ENCODE measurements at regions of chr7 and their contacts with region 1.

Region 1: DNA sequence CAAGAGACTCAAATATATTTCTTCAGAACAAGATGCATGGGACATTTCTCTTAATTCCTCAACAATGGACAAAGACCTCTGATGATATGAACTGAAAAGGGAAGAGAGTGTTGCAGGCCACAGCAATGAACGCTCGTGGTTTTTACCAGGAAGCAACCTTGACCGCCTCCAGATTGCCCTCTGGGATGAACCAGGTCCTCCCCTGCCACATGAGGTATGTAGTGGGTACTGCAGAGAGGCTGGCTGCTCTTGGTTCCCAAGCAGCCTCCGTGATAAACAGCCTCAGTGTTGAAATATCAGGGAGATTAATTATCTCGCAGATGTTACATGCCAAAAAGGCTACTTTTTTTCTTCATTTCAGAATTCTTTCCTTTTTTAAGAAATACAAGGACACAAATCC is 338.8 kb downstream of the ELMO1 start:
- DNase-seq: no peak
- H3K4me3 Mint-ChIP-seq: no peak overlapping the region
- H3K27ac Mint-ChIP-seq: peak overlapping the region; percentile 46
- H3K4me1 Mint-ChIP-seq: peaks cover 38% of the 10 kb centered on the region
- H3K27me3 Mint-ChIP-seq: no peaks in the 10 kb centered on the region

Region 2: DNA sequence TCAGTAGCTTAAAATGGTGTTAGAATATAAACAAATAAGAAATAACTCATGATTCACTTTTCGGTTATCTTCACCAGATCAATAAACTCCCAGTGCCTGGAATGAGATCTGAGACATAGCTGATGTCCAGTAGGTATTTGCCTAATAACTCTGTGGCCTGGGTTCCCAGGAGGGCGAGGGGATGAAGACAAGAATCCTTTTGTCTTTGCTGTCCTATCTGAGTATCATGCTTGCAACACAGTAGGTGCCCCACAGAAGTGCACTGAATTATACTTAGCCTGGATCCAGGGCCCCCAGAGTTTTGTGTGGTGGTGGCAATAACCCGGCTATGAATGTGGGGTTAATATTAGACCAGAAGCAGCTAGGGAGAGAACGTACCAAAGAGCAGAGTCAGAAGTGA is 35.5 kb before region 1 on chr7:
- intact Hi-C with region 1: loop called (anchors 5 kb)
- DNase-seq: no peak
- H3K4me3 Mint-ChIP-seq: no peak overlapping the region
- H3K27ac Mint-ChIP-seq: no peak overlapping the region
- H3K4me1 Mint-ChIP-seq: peaks cover 30% of the 10 kb centered on the region
- H3K27me3 Mint-ChIP-seq: no peaks in the 10 kb centered on the region

Region 3: GRCh38 chr7:37173670-37174069 is 63.8 kb after region 1 on chr7:
- intact Hi-C with region 1: loop called (anchors 5 kb)
- DNase-seq: no peak
- H3K4me3 Mint-ChIP-seq: no peak overlapping the region
- H3K27ac Mint-ChIP-seq: peak overlapping the region; percentile 76
- H3K4me1 Mint-ChIP-seq: peaks cover 38% of the 10 kb centered on the region
- H3K27me3 Mint-ChIP-seq: no peaks in the 10 kb centered on the region